ENCODE measurements at regions of chr5 and their contacts with region 1.

Region 1: DNA sequence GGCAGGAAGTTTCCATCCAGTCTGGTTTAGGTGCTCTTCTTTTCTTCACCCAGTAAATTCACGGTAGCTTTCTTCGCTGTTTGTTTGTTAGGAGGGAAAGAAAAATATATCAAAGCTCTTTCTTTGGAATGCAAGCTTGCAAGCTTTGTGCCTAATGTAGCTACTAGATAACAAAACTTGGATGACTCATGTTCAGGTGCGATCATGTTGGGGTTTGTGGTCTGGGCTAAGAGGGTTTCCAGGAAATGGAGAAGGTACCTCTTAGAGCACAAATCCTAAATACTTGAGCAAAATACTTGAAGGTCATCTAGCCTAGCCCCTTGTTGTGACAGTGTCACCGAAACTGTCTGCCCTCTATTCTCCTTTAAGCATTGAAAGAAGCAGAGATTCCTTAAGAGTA is 17.7 kb downstream of the SRP19 start:
- DNase-seq: peak in 6 of 9 donors; percentile 5 to 58 (median 14)
- ATAC-seq: peak; percentile 69
- H3K4me3 ChIP-seq: peak overlapping the region; percentile 8
- H3K4me3 Mint-ChIP-seq: peak overlapping the region in 6 of 10 donors; percentile 1 to 67 (median 16)
- H3K27ac ChIP-seq: peak overlapping the region; percentile 15
- H3K27ac Mint-ChIP-seq: peak overlapping the region in 8 of 9 donors; percentile 1 to 90 (median 68)
- H3K4me1 ChIP-seq: peaks cover 5 to 21% of the 10 kb centered on the region in 2 donors
- H3K4me1 Mint-ChIP-seq: peaks cover 22 to 42% (median 30%) of the 10 kb centered on the region in 7 donors
- H3K27me3 ChIP-seq: no peaks in the 10 kb centered on the region
- H3K27me3 Mint-ChIP-seq: no peaks in the 10 kb centered on the region

Region 2: GRCh38 chr5:112960315-112960714 is 81.6 kb after region 1 on chr5:
- CTCF ChIA-PET with region 1: no interaction called
- POLR2A ChIA-PET with region 1: no interaction called
- intact Hi-C with region 1: loop called (anchors 2 to 5 kb)
- DNase-seq: no peak
- ATAC-seq: no peak
- H3K4me3 ChIP-seq: no peak overlapping the region
- H3K4me3 Mint-ChIP-seq: no peak overlapping the region
- H3K27ac ChIP-seq: no peak overlapping the region
- H3K27ac Mint-ChIP-seq: peak overlapping the region in 1 of 9 donors; percentile 13
- H3K4me1 ChIP-seq: no peaks in the 10 kb centered on the region
- H3K4me1 Mint-ChIP-seq: peaks cover 6 to 44% (median 17%) of the 10 kb centered on the region in 7 donors
- H3K27me3 ChIP-seq: no peaks in the 10 kb centered on the region
- H3K27me3 Mint-ChIP-seq: peaks cover 0 to 7% (median 0%) of the 10 kb centered on the region in 5 donors

Measured in naive thymus-derived CD4-positive, alpha-beta T cell (primary cell).